ENCODE measurements at regions of chr4 and their contacts with region 1.

Region 1: DNA sequence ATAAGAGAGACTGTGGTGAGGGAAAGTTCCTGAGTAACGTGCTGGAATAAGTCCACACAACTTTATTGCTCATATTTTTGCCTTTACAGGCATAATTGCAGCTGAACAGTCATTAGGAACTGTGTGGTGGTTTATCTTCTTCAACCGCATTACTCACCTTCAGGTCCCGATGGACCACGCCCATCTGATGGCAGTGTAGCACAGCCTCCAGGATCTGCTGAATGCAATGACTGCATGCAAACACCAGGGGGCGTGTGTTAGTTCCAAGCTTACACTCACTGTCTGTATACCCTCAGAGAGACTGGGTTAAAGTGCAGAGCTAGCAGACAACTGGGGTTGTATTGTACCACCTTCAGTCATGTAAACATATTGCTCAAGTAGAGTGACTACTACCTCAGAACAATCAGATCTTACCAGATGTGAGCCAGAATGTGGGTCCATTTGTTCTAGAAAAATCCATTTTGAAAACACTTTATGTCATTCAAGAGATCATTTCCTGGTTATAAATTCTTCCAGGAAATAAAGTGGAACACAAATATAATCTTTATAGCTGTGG is 214.0 kb downstream of the CAMK2D start:
- DNase-seq: peak; percentile 83
- H3K4me3 ChIP-seq: no peak overlapping the region
- H3K27ac ChIP-seq: peak overlapping the region; percentile 68
- H3K4me1 ChIP-seq: peaks cover 31% of the 10 kb centered on the region
- H3K27me3 ChIP-seq: no peaks in the 10 kb centered on the region
- CTCF ChIP-seq: peak; percentile 97

Region 2: DNA sequence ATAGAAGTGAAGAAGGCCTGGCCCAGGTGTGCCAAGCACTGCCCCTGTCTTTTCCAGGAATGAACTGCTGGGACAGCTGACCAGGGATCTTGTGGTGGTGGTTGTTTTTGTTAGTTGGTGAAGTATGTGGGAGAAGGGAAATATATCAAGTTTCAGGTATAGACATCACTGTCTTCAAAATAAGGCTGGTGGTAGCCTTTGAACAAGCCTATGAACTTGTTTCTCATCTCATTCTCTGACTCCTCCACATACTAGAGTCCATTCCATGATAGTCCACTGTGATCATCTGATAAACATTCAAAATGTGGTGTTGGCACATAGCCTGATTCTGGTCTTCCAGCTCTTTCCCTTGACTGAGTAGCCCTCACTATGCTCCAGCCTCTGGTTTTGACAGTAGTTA is 89.7 kb before region 1 on chr4:
- intact Hi-C with region 1: no loop called
- DNase-seq: no peak
- H3K4me3 ChIP-seq: no peak overlapping the region
- H3K27ac ChIP-seq: peak overlapping the region; percentile 28
- H3K4me1 ChIP-seq: peaks cover 20% of the 10 kb centered on the region
- H3K27me3 ChIP-seq: no peaks in the 10 kb centered on the region
- CTCF ChIP-seq: no peak

Region 3: GRCh38 chr4:113636438-113636818 is 88.9 kb after region 1 on chr4:
- intact Hi-C with region 1: no loop called
- DNase-seq: no peak
- H3K4me3 ChIP-seq: peak overlapping the region; percentile 0
- H3K27ac ChIP-seq: peak overlapping the region; percentile 88
- H3K4me1 ChIP-seq: peaks cover 96% of the 10 kb centered on the region
- H3K27me3 ChIP-seq: no peaks in the 10 kb centered on the region
- CTCF ChIP-seq: peak; percentile 20

Region 4: GRCh38 chr4:113761620-113762185 is 214.1 kb after region 1 on chr4 and contains the start of gene CAMK2D:
- intact Hi-C with region 1: loop called (anchors 5 kb)
- DNase-seq: peak; percentile 89
- H3K4me3 ChIP-seq: peak within 1 kb of the TSS; percentile 92
- H3K27ac ChIP-seq: peak within 1 kb of the TSS; percentile 99
- H3K4me1 ChIP-seq: peaks cover 62% of the 10 kb centered on the region
- H3K27me3 ChIP-seq: no peaks in the 10 kb centered on the region
- CTCF ChIP-seq: peak; percentile 64
- total RNA-seq, gene CAMK2D: 223 TPM